GM13976 (cell line): ENCODE measurements at regions of chr5 and their contacts with region 1.

Region 1: GRCh38 chr5:116068028-116068632 is 16.7 kb upstream of the COMMD10 start:
- DNase-seq: peak; percentile 40
- CTCF ChIP-seq: peak; percentile 42

Region 2: DNA sequence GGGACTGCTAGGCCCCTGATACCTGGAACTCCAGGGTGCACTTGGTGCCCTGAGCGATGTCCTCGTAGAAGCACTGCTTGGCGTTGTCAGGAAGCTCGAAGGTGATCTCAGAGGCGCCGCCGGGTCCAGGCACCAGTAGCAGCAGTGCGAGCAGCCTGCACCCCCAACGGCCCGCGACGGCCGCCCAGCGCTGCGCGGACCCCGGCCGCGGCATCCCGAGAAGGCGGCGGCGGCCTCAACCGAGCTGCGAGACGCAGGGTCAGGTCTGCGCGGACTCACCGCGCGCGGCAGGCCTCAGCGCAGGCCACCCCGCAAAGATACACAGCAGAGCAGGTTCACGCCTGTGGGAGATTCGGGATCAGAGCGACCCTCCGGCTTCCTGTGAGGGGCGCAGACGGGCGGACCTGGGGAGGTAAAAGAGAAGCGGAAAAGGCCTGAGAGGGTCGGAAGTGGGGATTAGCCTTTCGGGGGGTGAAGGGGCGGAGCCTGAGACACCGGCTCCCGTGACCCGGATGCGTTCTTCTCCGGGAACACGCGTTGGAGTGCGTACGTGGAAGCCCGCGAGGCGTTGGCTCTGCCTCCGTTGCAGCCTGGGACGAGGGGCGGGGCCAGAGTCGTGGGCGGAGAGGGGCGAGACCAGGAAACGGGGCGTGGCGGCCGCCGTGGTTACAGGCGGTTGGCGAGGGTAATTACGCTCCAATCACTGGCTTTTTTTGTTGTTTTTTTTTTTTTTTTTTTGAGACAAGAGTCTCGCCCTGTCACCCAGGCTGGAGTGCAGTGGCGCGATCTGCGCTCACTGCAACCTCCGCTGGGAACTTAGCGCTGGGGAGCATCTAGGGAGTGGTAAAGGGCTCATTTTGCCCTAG is 442.3 kb before region 1 on chr5 and contains the start of gene TMED7:
- in situ Hi-C with region 1: loop called (anchors 10 kb)
- DNase-seq: peak; percentile 96
- CTCF ChIP-seq: no peak

Region 3: DNA sequence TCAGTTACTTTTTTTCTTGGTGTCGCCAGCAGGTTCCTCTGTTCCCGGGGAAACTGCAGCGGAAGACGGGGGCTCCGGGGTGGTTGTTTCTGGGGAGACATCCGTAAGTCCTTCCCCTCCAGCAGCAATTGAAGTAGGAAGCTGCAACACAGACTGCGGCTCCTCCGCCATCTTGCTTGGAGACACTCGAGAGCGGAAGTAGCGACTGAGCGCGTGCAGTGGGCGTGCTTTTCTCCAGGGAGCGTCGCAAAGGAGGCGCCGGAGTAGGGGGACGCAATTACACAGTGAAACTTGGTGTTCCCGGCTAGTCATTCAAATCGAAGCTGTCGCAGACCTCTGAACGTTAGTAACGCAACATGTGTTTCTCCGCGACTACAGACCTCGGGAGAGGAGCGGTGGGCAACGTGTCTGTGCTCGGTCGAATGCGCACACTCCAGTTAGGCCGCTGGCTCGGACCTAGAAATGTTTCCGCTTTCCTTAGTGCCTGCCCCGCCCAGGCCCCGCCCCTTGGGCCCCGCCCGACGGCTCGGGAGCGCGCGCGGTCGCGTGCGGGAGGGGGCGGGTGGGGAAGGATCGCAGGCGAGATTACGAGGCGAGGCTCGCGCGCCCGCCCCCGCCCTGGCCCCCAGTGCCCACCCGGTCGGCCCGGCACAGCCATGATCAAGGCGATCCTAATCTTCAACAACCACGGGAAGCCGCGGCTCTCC is 226.6 kb before region 1 on chr5 and contains the starts of genes AP3S1 and ATG12:
- in situ Hi-C with region 1: loop called (anchors 25 kb)
- DNase-seq: peak; percentile 90
- CTCF ChIP-seq: no peak